Ascending aorta (tissue), 2 donors: ENCODE measurements at regions of chr11 and their contacts with region 1.

Region 1: DNA sequence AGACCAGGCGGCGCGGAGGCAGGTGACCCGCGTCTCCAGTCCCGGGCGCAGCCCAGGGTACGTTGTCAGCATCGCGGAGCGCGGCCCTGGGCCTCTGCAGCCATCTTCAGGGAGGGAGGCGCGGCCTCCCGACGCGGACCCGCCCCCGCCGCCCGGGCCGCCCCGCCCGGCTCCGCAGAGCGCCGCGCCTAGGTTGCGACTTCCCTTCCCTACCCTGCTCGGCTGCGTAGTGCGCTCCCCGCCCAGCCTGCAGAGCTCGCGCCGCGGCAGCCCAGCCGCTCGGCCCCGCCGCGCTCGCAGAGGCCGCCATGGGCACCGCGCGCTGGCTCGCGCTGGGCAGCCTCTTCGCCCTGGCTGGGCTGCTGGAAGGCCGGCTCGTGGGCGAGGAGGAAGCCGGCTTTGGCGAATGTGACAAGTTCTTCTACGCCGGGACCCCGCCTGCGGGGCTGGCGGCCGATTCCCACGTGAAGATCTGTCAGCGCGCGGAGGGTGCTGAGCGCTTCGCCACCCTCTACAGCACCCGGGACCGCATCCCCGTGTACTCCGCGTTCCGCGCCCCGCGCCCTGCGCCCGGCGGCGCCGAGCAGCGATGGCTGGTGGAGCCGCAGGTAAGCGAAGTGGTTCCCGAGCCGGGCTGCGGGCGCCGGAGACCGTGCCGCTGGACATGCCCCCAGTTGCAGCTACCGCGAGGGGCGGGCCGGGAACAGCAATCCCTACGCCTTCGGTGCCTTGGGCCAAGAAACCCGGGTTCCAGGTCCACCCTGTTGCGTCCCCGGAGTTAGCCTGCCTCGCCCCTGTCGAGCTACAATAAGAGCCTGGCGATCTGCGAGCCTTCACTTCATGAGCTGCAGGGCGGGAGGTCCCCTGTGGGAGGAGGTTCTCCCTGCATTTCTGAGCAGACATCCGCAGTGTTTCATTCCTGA is at the start of gene ENDOD1:
- DNase-seq: peak; percentile 18 to 90
- H3K4me3 ChIP-seq: peak within 1 kb of the TSS; percentile 82 to 97
- H3K27ac ChIP-seq: peak within 1 kb of the TSS; percentile 90 to 94
- H3K4me1 ChIP-seq: peaks cover 8 to 34% of the 10 kb centered on the region in 2 donors
- H3K27me3 ChIP-seq: no peaks in the 10 kb centered on the region
- CTCF ChIP-seq: peak in 1 of 3 experiments; percentile 17
- total RNA-seq, gene ENDOD1: 60.2 TPM

Region 2: GRCh38 chr11:94664346-94664745 is 425.5 kb before region 1 on chr11:
- intact Hi-C with region 1: no loop called
- DNase-seq: no peak
- H3K4me3 ChIP-seq: no peak overlapping the region
- H3K27ac ChIP-seq: no peak overlapping the region
- H3K4me1 ChIP-seq: no peaks in the 10 kb centered on the region
- H3K27me3 ChIP-seq: no peaks in the 10 kb centered on the region
- CTCF ChIP-seq: no peak

Region 3: DNA sequence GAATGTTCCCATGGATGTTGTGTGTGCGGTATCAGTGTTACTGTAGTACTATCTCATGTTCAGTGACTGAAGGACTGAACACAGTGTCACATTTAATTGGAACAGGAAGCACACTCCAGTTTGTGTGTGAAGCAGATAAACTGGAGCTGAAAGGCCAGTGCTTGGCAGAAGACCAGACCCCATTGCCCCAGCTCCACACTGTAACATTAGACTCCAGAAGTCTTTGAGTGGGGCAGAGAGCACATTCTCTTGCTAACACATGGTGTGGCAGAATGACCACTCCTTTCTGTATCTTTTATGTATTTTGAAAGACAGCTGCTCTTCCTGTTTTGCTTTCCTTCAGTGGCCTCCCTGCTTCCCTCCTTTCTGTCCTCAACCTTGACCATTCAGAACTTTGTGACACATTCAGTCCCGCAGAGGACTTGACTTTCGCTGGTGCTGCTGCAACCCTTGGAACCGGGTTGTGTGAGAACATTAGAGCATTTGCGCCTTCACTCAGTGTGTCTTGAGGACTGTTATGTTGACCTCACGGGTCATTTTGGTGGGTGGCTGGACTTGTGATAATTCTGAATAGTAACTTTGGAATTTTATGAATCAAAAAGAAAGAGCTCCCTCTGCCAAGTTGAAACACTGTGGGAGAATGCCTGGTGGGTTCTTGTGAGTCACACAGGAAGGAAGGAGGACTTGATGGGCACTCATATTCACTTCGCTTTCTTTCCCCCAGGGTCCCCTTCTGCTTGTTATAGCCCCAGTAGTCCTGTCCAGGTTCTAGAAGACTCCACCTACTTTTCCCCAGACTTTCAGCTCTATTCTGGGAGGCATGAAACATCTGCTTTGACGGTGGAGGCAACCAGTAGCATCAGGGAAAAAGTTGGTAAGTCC is 295.4 kb before region 1 on chr11:
- intact Hi-C with region 1: loop called (anchors 10 kb)
- DNase-seq: peak in 1 of 2 donors; percentile 90
- H3K4me3 ChIP-seq: peak overlapping the region; percentile 34 to 36
- H3K27ac ChIP-seq: peak overlapping the region; percentile 75 to 81
- H3K4me1 ChIP-seq: peaks cover 7 to 32% of the 10 kb centered on the region in 2 donors
- H3K27me3 ChIP-seq: no peaks in the 10 kb centered on the region
- CTCF ChIP-seq: no peak

Region 4: DNA sequence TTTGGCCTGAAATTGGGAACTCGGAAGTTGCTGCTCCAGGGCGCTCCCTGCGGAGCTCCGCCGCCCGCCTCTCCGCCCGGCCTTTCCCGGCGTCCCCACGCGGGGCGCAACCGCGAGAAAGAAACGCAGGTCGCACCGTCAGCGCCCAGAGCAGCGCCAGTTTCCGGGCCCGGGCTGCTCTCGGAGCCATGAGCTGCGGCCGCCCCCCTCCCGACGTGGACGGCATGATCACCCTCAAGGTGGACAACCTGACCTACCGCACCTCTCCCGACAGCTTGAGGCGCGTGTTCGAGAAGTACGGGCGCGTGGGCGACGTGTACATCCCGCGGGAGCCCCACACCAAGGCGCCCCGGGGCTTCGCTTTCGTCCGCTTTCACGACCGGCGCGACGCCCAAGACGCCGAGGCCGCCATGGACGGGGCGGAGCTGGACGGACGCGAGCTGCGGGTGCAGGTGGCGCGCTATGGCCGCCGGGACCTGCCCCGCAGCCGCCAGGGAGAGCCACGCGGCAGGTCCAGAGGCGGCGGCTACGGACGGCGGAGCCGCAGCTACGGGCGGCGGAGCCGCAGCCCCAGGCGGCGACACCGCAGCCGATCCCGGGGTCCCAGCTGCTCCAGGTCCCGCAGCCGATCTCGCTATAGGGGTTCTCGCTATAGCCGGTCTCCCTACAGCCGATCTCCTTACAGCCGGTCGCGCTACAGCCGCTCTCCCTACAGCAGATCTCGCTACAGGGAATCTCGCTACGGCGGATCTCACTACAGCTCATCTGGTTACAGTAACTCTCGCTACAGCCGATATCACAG is 22.6 kb before region 1 on chr11:
- intact Hi-C with region 1: loop called (anchors 1 kb)
- DNase-seq: peak in 1 of 2 donors; percentile 93
- H3K4me3 ChIP-seq: peak overlapping the region; percentile 88 to 95
- H3K27ac ChIP-seq: peak overlapping the region; percentile 98 to 99
- H3K4me1 ChIP-seq: peaks cover 0 to 14% of the 10 kb centered on the region in 2 donors
- H3K27me3 ChIP-seq: no peaks in the 10 kb centered on the region
- CTCF ChIP-seq: peak; percentile 71 to 78 (median 73)

Region 5: GRCh38 chr11:95150946-95151684 is 61.2 kb after region 1 on chr11:
- intact Hi-C with region 1: loop called (anchors 2 kb)
- DNase-seq: peak; percentile 60 to 96
- H3K4me3 ChIP-seq: peak overlapping the region; percentile 76 to 88
- H3K27ac ChIP-seq: peak overlapping the region; percentile 89 to 94
- H3K4me1 ChIP-seq: peaks cover 0 to 15% of the 10 kb centered on the region in 2 donors
- H3K27me3 ChIP-seq: no peaks in the 10 kb centered on the region
- CTCF ChIP-seq: peak; percentile 71 to 95 (median 83)

Region 6: GRCh38 chr11:95358511-95359340 is 268.8 kb after region 1 on chr11:
- intact Hi-C with region 1: no loop called
- DNase-seq: no peak
- H3K4me3 ChIP-seq: no peak overlapping the region
- H3K27ac ChIP-seq: no peak overlapping the region
- H3K4me1 ChIP-seq: peaks cover 0 to 20% of the 10 kb centered on the region in 2 donors
- H3K27me3 ChIP-seq: no peaks in the 10 kb centered on the region
- CTCF ChIP-seq: no peak

Region 7: GRCh38 chr11:95641495-95641894 is 551.6 kb after region 1 on chr11:
- intact Hi-C with region 1: loop called (anchors 10 kb)
- DNase-seq: peak; percentile 10 to 83
- H3K4me3 ChIP-seq: no peak overlapping the region
- H3K27ac ChIP-seq: peak overlapping the region; percentile 49 to 51
- H3K4me1 ChIP-seq: peaks cover 0 to 8% of the 10 kb centered on the region in 2 donors
- H3K27me3 ChIP-seq: no peaks in the 10 kb centered on the region
- CTCF ChIP-seq: no peak